PC-3 (cell line): ENCODE measurements at regions of chr18 and their contacts with region 1.

Region 1: DNA sequence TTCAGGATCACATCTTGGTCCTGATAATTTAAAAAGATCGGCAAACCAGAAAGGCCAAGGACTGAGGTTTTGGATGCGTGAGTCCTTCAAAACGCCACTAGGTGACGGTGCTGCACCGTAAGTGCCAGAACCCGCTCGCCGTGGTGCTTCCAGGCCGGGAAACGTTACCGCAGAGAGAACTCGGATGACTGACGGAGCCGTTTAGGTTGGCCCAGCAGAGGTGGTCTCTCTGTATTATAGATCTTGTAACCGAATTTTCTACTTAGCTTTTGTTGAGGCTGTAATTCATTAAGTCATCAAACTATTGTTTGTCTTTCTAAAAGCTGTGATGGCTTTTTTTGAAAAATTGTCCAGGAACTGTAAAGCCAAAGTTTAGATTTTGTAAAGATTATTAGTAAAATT is 39.8 kb upstream of the ADCYAP1 start:
- DNase-seq: peak; percentile 86
- ATAC-seq: peak; percentile 99
- H3K4me3 ChIP-seq: no peak overlapping the region
- H3K27ac ChIP-seq: no peak overlapping the region
- H3K4me1 ChIP-seq: no peaks in the 10 kb centered on the region
- H3K27me3 ChIP-seq: peaks cover 24% of the 10 kb centered on the region; the same call in 1 of the 2 replicates
- CTCF ChIP-seq: peak; percentile 99

Region 2: GRCh38 chr18:623761-624620 is 240.9 kb before region 1 on chr18:
- CTCF ChIA-PET with region 1: no interaction called
- POLR2A ChIA-PET with region 1: no interaction called
- intact Hi-C with region 1: no loop called
- DNase-seq: peak; percentile 85
- ATAC-seq: peak; percentile 99
- H3K4me3 ChIP-seq: no peak overlapping the region
- H3K27ac ChIP-seq: no peak overlapping the region
- H3K4me1 ChIP-seq: no peaks in the 10 kb centered on the region
- H3K27me3 ChIP-seq: peaks cover 23% of the 10 kb centered on the region; the same call in 1 of the 2 replicates
- CTCF ChIP-seq: peak; percentile 62

Region 3: GRCh38 chr18:961644-962355 is 96.9 kb after region 1 on chr18:
- CTCF ChIA-PET with region 1: no interaction called
- POLR2A ChIA-PET with region 1: no interaction called
- intact Hi-C with region 1: loop called (anchors 1 kb)
- DNase-seq: peak; percentile 70
- ATAC-seq: peak; percentile 31; the same call in 1 of the 2 replicates
- H3K4me3 ChIP-seq: peak overlapping the region; percentile 50
- H3K27ac ChIP-seq: no peak overlapping the region
- H3K4me1 ChIP-seq: peaks cover 4% of the 10 kb centered on the region; the same call in 1 of the 2 replicates
- H3K27me3 ChIP-seq: peaks cover 19% of the 10 kb centered on the region
- CTCF ChIP-seq: peak; percentile 93

Region 4: GRCh38 chr18:1663879-1664705 is 799.2 kb after region 1 on chr18:
- CTCF ChIA-PET with region 1: no interaction called
- POLR2A ChIA-PET with region 1: no interaction called
- intact Hi-C with region 1: loop called (anchors 5 kb)
- DNase-seq: peak; percentile 69
- ATAC-seq: peak; percentile 77
- H3K4me3 ChIP-seq: no peak overlapping the region
- H3K27ac ChIP-seq: no peak overlapping the region
- H3K4me1 ChIP-seq: no peaks in the 10 kb centered on the region
- H3K27me3 ChIP-seq: peaks cover 25% of the 10 kb centered on the region
- CTCF ChIP-seq: peak; percentile 98

Region 5: GRCh38 chr18:2083691-2084090 is 1218.8 kb after region 1 on chr18:
- CTCF ChIA-PET with region 1: no interaction called
- POLR2A ChIA-PET with region 1: no interaction called
- intact Hi-C with region 1: loop called (anchors 10 kb)
- DNase-seq: peak; percentile 44
- ATAC-seq: peak; percentile 49; the same call in 1 of the 2 replicates
- H3K4me3 ChIP-seq: no peak overlapping the region
- H3K27ac ChIP-seq: no peak overlapping the region
- H3K4me1 ChIP-seq: no peaks in the 10 kb centered on the region
- H3K27me3 ChIP-seq: peaks cover 19% of the 10 kb centered on the region
- CTCF ChIP-seq: peak; percentile 63

Region 6: DNA sequence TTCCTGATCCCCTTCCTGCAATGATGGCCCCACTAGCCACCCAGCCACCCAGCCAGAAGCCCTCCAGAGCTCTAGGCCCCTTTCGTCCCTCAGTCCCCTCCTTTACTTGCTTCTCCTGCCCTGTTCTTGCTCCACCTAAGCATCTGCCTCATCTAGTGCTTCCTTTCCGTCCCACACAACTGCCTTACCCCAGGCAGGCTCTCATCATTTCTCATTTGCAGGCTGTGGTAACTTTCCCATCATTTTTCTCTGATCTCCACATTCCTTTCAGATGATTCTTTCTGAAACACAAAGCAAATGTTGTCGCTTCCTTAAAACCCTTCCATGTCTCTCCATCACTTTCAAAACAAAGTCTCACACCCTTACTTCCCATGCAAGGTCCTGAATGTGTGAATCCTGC is 1246.6 kb after region 1 on chr18:
- CTCF ChIA-PET with region 1: no interaction called
- POLR2A ChIA-PET with region 1: no interaction called
- intact Hi-C with region 1: loop called (anchors 10 kb)
- DNase-seq: peak; percentile 60
- ATAC-seq: peak; percentile 56
- H3K4me3 ChIP-seq: no peak overlapping the region
- H3K27ac ChIP-seq: no peak overlapping the region; the same call in 1 of the 2 replicates
- H3K4me1 ChIP-seq: peaks cover 37% of the 10 kb centered on the region
- H3K27me3 ChIP-seq: no peaks in the 10 kb centered on the region
- CTCF ChIP-seq: no peak